Naive thymus-derived CD4-positive, alpha-beta T cell (primary cell): ENCODE measurements at regions of chr6 and their contacts with region 1.

Region 1: GRCh38 chr6:37432916-37433656 is at the start of gene CMTR1:
- DNase-seq: peak; percentile 94 to 99 (median 95)
- ATAC-seq: peak; percentile 96
- H3K4me3 ChIP-seq: peak within 1 kb of the TSS; percentile 64
- H3K4me3 Mint-ChIP-seq: peak within 1 kb of the TSS; percentile 83 to 96 (median 94)
- H3K27ac ChIP-seq: peak within 1 kb of the TSS; percentile 94
- H3K27ac Mint-ChIP-seq: peak within 1 kb of the TSS; percentile 92 to 97 (median 96)
- H3K4me1 ChIP-seq: peaks cover 12 to 25% of the 10 kb centered on the region in 2 donors
- H3K4me1 Mint-ChIP-seq: peaks cover 24 to 55% (median 47%) of the 10 kb centered on the region in 7 donors
- H3K27me3 ChIP-seq: no peaks in the 10 kb centered on the region
- H3K27me3 Mint-ChIP-seq: peaks cover 2 to 9% (median 8%) of the 10 kb centered on the region in 5 donors
- total RNA-seq, gene CMTR1: 70.0 to 89.4 (median 71.8) TPM

Region 2: GRCh38 chr6:36874443-36875249 is 558.4 kb before region 1 on chr6 and contains the start of gene PPIL1:
- CTCF ChIA-PET with region 1: no interaction called
- POLR2A ChIA-PET with region 1: no interaction called
- intact Hi-C with region 1: loop called in 1 of 2 experiments (anchors 10 kb)
- DNase-seq: peak; percentile 75 to 92 (median 90)
- ATAC-seq: peak; percentile 92
- H3K4me3 ChIP-seq: peak within 1 kb of the TSS; percentile 92
- H3K4me3 Mint-ChIP-seq: peak within 1 kb of the TSS; percentile 85 to 100 (median 98)
- H3K27ac ChIP-seq: peak within 1 kb of the TSS; percentile 87
- H3K27ac Mint-ChIP-seq: peak within 1 kb of the TSS; percentile 97 to 100 (median 98)
- H3K4me1 ChIP-seq: peaks cover 8 to 21% of the 10 kb centered on the region in 2 donors
- H3K4me1 Mint-ChIP-seq: peaks cover 13 to 54% (median 47%) of the 10 kb centered on the region in 7 donors
- H3K27me3 ChIP-seq: no peaks in the 10 kb centered on the region
- H3K27me3 Mint-ChIP-seq: peaks cover 0 to 7% (median 5%) of the 10 kb centered on the region in 5 donors
- total RNA-seq, gene PPIL1: 3.5 to 34.7 (median 10.3) TPM

Region 3: DNA sequence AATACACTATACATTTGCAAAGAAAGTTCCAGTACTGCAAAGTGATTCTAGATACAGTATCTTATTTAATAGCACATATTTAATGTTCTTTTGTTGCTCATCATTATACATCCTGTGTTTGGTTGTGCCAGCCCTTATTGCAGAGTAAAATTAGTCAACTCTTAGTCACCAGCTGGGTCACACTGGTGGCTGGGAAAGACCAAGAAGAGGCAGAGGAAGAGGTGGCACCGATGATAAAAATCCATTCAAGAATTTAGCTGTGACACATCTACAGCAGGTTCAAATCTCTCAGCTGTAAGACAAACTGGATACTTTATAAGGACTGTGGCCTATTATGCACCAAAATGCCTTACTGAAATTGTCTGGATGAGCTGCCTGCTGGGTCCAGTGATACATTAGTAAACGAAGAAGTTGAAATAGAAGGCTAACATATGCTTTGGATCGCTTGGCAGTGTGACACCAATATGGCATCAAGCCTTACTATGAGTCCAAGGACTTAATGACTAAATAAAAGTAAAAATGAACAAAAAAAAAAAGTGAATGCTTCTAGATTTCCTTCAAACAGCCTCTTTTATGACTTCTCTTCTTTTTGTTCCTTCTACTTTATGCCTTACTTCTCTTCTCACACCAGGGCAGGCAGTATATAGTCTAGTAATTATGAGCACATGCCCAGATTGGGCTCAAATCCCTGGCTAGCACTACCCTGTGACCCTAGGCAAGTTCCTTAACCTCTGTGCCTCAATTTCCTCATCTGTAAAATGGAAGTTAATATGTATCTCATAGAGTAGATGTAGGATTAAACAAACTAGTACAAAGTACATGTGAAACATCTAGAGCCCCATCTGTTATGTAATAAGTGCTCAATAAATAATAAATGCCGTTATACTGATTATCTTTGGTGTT is 108.7 kb before region 1 on chr6:
- CTCF ChIA-PET with region 1: no interaction called
- POLR2A ChIA-PET with region 1: no interaction called
- intact Hi-C with region 1: loop called in 1 of 2 experiments (anchors 10 kb)
- DNase-seq: no peak
- ATAC-seq: no peak
- H3K4me3 ChIP-seq: no peak overlapping the region
- H3K4me3 Mint-ChIP-seq: no peak overlapping the region
- H3K27ac ChIP-seq: no peak overlapping the region
- H3K27ac Mint-ChIP-seq: peak overlapping the region in 5 of 9 donors; percentile 2 to 48 (median 11)
- H3K4me1 ChIP-seq: no peaks in the 10 kb centered on the region
- H3K4me1 Mint-ChIP-seq: peaks cover 0 to 16% (median 4%) of the 10 kb centered on the region in 7 donors
- H3K27me3 ChIP-seq: no peaks in the 10 kb centered on the region
- H3K27me3 Mint-ChIP-seq: no peaks in the 10 kb centered on the region

Region 4: GRCh38 chr6:37353761-37354525 is 79.1 kb before region 1 on chr6 and contains the start of gene RNF8:
- CTCF ChIA-PET with region 1: no interaction called
- POLR2A ChIA-PET with region 1: interaction called, 3 read pairs
- intact Hi-C with region 1: loop called (anchors 1 to 2 kb)
- DNase-seq: peak; percentile 72 to 92 (median 84)
- ATAC-seq: peak; percentile 96
- H3K4me3 ChIP-seq: peak within 1 kb of the TSS; percentile 94
- H3K4me3 Mint-ChIP-seq: peak within 1 kb of the TSS; percentile 90 to 98 (median 95)
- H3K27ac ChIP-seq: peak within 1 kb of the TSS; percentile 79
- H3K27ac Mint-ChIP-seq: peak within 1 kb of the TSS; percentile 81 to 93 (median 88)
- H3K4me1 ChIP-seq: peaks cover 7 to 14% of the 10 kb centered on the region in 2 donors
- H3K4me1 Mint-ChIP-seq: peaks cover 21 to 49% (median 37%) of the 10 kb centered on the region in 7 donors
- H3K27me3 ChIP-seq: no peaks in the 10 kb centered on the region
- H3K27me3 Mint-ChIP-seq: no peaks in the 10 kb centered on the region
- total RNA-seq, gene RNF8: 7.1 to 26.0 (median 15.8) TPM

Region 5: GRCh38 chr6:37381579-37381978 is 51.5 kb before region 1 on chr6:
- CTCF ChIA-PET with region 1: no interaction called
- POLR2A ChIA-PET with region 1: no interaction called
- intact Hi-C with region 1: loop called in 1 of 2 experiments (anchors 5 kb)
- DNase-seq: peak in 7 of 9 donors; percentile 18 to 48 (median 35)
- ATAC-seq: peak; percentile 61
- H3K4me3 ChIP-seq: no peak overlapping the region
- H3K4me3 Mint-ChIP-seq: no peak overlapping the region
- H3K27ac ChIP-seq: no peak overlapping the region
- H3K27ac Mint-ChIP-seq: peak overlapping the region in 1 of 9 donors; percentile 19
- H3K4me1 ChIP-seq: no peaks in the 10 kb centered on the region
- H3K4me1 Mint-ChIP-seq: peaks cover 0 to 3% (median 0%) of the 10 kb centered on the region in 7 donors
- H3K27me3 ChIP-seq: no peaks in the 10 kb centered on the region
- H3K27me3 Mint-ChIP-seq: no peaks in the 10 kb centered on the region